ENCODE measurements at regions of chr6 and their contacts with region 1.

Region 1: GRCh38 chr6:40845553-40845952 is 193.5 kb downstream of the UNC5CL start:
- DNase-seq: peak; percentile 12
- H3K4me3 ChIP-seq: no peak overlapping the region
- H3K27ac ChIP-seq: no peak overlapping the region
- H3K4me1 ChIP-seq: no peaks in the 10 kb centered on the region
- H3K27me3 ChIP-seq: peaks cover 9% of the 10 kb centered on the region
- CTCF ChIP-seq: peak in 4 of 5 experiments; percentile 20 to 40 (median 32)
- EP300 ChIP-seq: no peak
- POLR2A ChIP-seq: no peak

Region 2: GRCh38 chr6:39347906-39348585 is 1497.5 kb before region 1 on chr6:
- in situ Hi-C with region 1: loop called in 2 of 4 experiments (anchors 25 kb)
- intact Hi-C with region 1: no loop called
- DNase-seq: peak; percentile 69
- H3K4me3 ChIP-seq: no peak overlapping the region
- H3K27ac ChIP-seq: no peak overlapping the region
- H3K4me1 ChIP-seq: peaks cover 0 to under 1% (median 0%) of the 10 kb centered on the region in 4 donors
- H3K27me3 ChIP-seq: no peaks in the 10 kb centered on the region
- CTCF ChIP-seq: peak; percentile 74 to 90 (median 80)
- EP300 ChIP-seq: no peak
- POLR2A ChIP-seq: no peak